ENCODE measurements at regions of chr5 and their contacts with region 1.

Region 1: GRCh38 chr5:139262742-139263445 is 30.6 kb upstream of the MATR3 start:
- DNase-seq: peak; percentile 83
- ATAC-seq: peak; percentile 99
- H3K4me3 ChIP-seq: no peak overlapping the region
- H3K27ac ChIP-seq: no peak overlapping the region
- H3K4me1 ChIP-seq: peaks cover 0 to 11% of the 10 kb centered on the region in 2 experiments; a peak in 3 of 4 replicates
- H3K27me3 ChIP-seq: no peaks in the 10 kb centered on the region
- CTCF ChIP-seq: peak; percentile 85 to 94 (median 86)
- POLR2A ChIP-seq: no peak
- RAD21 ChIP-seq: peak; percentile 99

Region 2: GRCh38 chr5:138641547-138642298 is 621.2 kb before region 1 on chr5:
- CTCF ChIA-PET with region 1: no interaction called
- POLR2A ChIA-PET with region 1: no interaction called
- RAD21 ChIA-PET with region 1: interaction called in 1 of 2 experiments, 3 read pairs
- intact Hi-C with region 1: loop called (anchors 1 kb)
- DNase-seq: peak; percentile 48
- ATAC-seq: peak; percentile 96
- H3K4me3 ChIP-seq: no peak overlapping the region
- H3K27ac ChIP-seq: no peak overlapping the region
- H3K4me1 ChIP-seq: peaks cover 3 to 8% of the 10 kb centered on the region in 2 experiments; a peak in 3 of 4 replicates
- H3K27me3 ChIP-seq: no peaks in the 10 kb centered on the region
- CTCF ChIP-seq: peak; percentile 88 to 95 (median 94)
- POLR2A ChIP-seq: no peak
- RAD21 ChIP-seq: peak; percentile 95

Region 3: DNA sequence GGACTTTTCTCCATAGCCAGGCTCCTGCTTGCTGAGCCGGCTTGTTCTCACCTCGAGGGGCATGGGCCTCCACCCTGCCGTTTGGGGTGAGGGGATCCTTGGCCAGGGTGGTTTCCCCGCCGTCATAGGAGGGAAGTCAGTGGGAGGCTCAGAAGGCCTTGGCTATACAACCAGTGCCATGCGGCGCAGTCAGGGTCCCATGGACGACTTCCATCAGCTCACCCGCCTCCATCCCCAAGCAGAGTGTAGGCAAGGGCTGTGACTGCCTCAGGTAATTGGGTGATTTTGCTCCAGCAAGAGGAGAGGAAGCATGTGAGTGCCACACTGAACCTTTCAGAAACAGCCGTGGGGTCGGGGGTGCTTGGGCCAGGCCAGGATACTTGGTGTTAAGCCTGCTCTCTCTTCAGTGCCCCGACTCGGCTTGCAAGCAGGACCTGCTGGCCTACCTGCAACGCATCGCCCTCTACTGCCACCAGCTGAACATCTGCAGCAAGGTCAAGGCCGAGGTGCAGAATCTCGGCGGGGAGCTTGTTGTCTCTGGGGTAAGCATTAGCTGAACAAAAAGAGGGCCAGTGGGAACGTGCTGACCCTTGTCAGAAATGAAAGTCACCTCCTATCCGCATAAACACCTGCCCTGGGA is 330.6 kb before region 1 on chr5:
- CTCF ChIA-PET with region 1: no interaction called
- POLR2A ChIA-PET with region 1: no interaction called
- RAD21 ChIA-PET with region 1: no interaction called
- intact Hi-C with region 1: loop called (anchors 10 kb)
- DNase-seq: no peak
- ATAC-seq: peak; percentile 49
- H3K4me3 ChIP-seq: no peak overlapping the region
- H3K27ac ChIP-seq: no peak overlapping the region
- H3K4me1 ChIP-seq: no peaks in the 10 kb centered on the region
- H3K27me3 ChIP-seq: no peaks in the 10 kb centered on the region
- CTCF ChIP-seq: peak; percentile 20 to 41 (median 37); a peak in 5 of 6 replicates
- POLR2A ChIP-seq: no peak
- RAD21 ChIP-seq: peak; percentile 43

Region 4: DNA sequence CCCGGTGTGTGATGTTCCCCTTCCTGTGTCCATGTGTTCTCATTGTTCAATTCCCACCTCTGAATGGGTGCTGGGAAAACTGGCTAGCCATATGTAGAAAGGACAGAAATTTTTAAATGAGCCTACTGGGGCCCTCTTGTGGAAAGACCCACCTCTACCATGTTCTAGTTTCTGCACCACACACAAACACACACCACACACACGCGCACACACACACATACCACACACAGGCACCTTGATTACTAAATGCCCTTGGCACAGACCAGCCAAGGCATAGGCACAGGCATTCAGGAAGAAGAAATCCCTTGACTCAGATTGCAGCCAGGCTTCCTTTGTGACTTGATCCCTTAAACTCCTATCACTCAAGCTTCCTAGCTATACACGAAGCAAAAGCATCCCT is 125.2 kb before region 1 on chr5:
- CTCF ChIA-PET with region 1: no interaction called
- POLR2A ChIA-PET with region 1: no interaction called
- RAD21 ChIA-PET with region 1: no interaction called
- intact Hi-C with region 1: loop called (anchors 2 kb)
- DNase-seq: peak; percentile 12
- ATAC-seq: peak; percentile 57
- H3K4me3 ChIP-seq: no peak overlapping the region
- H3K27ac ChIP-seq: no peak overlapping the region
- H3K4me1 ChIP-seq: peaks cover 29 to 37% of the 10 kb centered on the region in 2 experiments
- H3K27me3 ChIP-seq: no peaks in the 10 kb centered on the region
- CTCF ChIP-seq: peak; percentile 38 to 45 (median 38); a peak in 5 of 6 replicates
- POLR2A ChIP-seq: no peak
- RAD21 ChIP-seq: peak; percentile 61

Region 5: DNA sequence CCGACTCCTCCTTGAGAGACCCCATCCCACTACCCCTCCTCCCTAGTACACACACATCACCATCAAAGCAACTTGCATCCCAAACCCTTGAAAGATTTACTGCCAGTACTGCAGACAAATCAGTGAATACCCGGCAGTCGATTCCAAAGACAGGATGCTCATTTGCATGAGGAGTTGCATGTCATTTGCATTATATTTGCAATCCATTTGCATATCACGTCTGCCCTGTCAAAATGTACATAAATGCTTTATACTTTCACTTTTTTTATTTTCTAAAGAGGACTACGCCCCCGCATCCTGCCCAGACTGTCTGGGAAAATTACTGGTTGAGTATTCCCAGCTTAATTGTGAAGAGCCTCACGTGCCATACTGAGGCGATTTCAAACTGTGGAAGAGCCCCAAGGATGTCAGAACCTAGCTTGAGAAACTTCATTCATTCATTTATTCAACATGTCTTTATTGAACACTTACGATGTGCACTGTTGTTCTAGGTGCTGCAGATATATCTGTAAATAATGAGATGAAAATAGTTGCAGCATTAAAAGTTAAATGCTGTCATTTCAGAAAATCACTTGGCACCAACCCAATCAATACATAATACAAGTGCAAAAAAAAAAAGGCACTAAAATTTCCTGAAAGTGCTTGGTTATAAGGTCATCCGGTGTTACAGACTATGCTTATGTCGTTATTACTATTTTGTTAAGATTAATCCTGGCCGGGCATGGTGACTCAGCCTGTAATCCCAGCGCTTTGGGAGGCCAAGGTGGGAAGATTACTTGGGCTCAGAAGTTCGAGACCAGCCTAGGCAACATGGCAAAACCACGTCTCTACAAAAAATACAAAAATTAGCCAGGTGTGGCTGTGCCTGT is 47.6 kb before region 1 on chr5:
- CTCF ChIA-PET with region 1: no interaction called
- POLR2A ChIA-PET with region 1: no interaction called
- RAD21 ChIA-PET with region 1: no interaction called
- intact Hi-C with region 1: no loop called
- DNase-seq: no peak
- ATAC-seq: no peak
- H3K4me3 ChIP-seq: no peak overlapping the region
- H3K27ac ChIP-seq: no peak overlapping the region
- H3K4me1 ChIP-seq: no peaks in the 10 kb centered on the region
- H3K27me3 ChIP-seq: no peaks in the 10 kb centered on the region
- CTCF ChIP-seq: no peak
- POLR2A ChIP-seq: no peak
- RAD21 ChIP-seq: no peak

Region 6: GRCh38 chr5:139517683-139518564 is 255.0 kb after region 1 on chr5:
- CTCF ChIA-PET with region 1: no interaction called
- POLR2A ChIA-PET with region 1: no interaction called
- RAD21 ChIA-PET with region 1: no interaction called
- intact Hi-C with region 1: no loop called
- DNase-seq: peak; percentile 51
- ATAC-seq: peak; percentile 84
- H3K4me3 ChIP-seq: peak overlapping the region; percentile 53 to 55
- H3K27ac ChIP-seq: peak overlapping the region; percentile 54
- H3K4me1 ChIP-seq: peaks cover 5 to 13% of the 10 kb centered on the region in 2 experiments; a peak in 3 of 4 replicates
- H3K27me3 ChIP-seq: no peaks in the 10 kb centered on the region
- CTCF ChIP-seq: peak; percentile 82 to 96 (median 88)
- POLR2A ChIP-seq: peak; percentile 73
- RAD21 ChIP-seq: peak; percentile 71

Measured in HCT116 (cell line).